PC-9 (cell line): ENCODE measurements at regions of chr22 and their contacts with region 1.

Region 1: DNA sequence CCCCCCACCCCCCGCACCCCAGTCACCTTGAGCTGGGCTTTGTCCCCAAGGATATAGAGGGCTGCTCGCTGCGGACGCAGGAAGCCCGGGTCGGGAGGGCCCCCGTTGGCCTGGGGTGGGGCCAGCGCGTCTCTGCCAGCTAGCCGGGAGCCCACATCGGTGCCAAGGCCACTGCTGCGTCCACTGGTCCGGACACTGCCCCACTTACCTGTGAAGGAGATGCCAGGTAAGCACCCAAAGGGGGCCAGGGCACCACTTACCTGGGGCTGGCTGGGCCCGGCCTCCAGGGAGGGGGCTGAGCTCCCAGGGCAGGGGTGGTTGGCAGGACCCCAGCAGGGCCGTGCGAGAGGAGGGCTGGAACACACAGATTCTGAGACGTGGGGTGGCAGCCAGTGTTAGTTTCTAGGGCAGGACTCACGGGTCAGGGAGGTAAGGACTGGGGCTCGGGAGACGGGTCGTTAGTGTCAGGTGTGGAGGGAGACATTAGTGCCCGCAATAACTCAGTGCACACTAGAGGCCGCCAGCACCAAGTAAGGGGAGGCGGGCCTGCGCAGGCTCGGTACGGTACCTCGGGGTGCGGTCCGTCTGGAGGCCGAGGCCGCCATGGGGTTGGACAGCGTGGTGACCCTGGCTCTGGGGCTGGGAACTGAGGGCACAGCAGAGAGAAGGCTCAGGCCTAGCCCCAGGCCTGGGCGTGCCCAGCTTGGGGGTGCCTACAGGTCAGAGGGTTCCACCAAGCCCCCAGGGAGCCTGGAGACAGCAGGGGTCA is 18.2 kb downstream of the SBF1 start:
- DNase-seq: no peak
- H3K4me3 ChIP-seq: no peak overlapping the region
- H3K27ac ChIP-seq: no peak overlapping the region
- H3K4me1 ChIP-seq: no peaks in the 10 kb centered on the region
- H3K27me3 ChIP-seq: no peaks in the 10 kb centered on the region
- CTCF ChIP-seq: peak; percentile 54; the same call in 1 of the 2 replicates

Region 2: GRCh38 chr22:50348058-50348457 is 108.6 kb before region 1 on chr22:
- CTCF ChIA-PET with region 1: interaction called, 11 read pairs
- POLR2A ChIA-PET with region 1: no interaction called
- intact Hi-C with region 1: no loop called
- DNase-seq: no peak
- H3K4me3 ChIP-seq: no peak overlapping the region
- H3K27ac ChIP-seq: peak overlapping the region; percentile 10; the same call in 1 of the 2 replicates
- H3K4me1 ChIP-seq: no peaks in the 10 kb centered on the region
- H3K27me3 ChIP-seq: no peaks in the 10 kb centered on the region
- CTCF ChIP-seq: no peak